Activated T-helper 1 cell treated with anti-CD3 and anti-CD28 coated beads, Interleukin-12 subunit alpha, Interleukin-12 subunit beta, Interleukin-2, Interleukin-4 antibody, amounts not matched to agents 30 ng/mL and 10 ng/mL and 1 ng/mL, durations not matched to agents 14 hours and 24 hours and 36 hours (primary cell): ENCODE measurements at regions of chr2 and their contacts with region 1.

Region 1: GRCh38 chr2:38572167-38572566 is 30.6 kb downstream of the HNRNPLL start:
- DNase-seq: no peak
- H3K4me3 Mint-ChIP-seq: peak overlapping the region; percentile 1
- H3K27ac Mint-ChIP-seq: peak overlapping the region; percentile 70
- H3K4me1 Mint-ChIP-seq: peaks cover 62% of the 10 kb centered on the region
- H3K27me3 Mint-ChIP-seq: no peaks in the 10 kb centered on the region

Region 2: GRCh38 chr2:38417745-38418689 is 154.2 kb before region 1 on chr2:
- intact Hi-C with region 1: no loop called
- DNase-seq: no peak
- H3K4me3 Mint-ChIP-seq: no peak overlapping the region
- H3K27ac Mint-ChIP-seq: no peak overlapping the region
- H3K4me1 Mint-ChIP-seq: no peaks in the 10 kb centered on the region
- H3K27me3 Mint-ChIP-seq: peaks cover 3% of the 10 kb centered on the region

Region 3: DNA sequence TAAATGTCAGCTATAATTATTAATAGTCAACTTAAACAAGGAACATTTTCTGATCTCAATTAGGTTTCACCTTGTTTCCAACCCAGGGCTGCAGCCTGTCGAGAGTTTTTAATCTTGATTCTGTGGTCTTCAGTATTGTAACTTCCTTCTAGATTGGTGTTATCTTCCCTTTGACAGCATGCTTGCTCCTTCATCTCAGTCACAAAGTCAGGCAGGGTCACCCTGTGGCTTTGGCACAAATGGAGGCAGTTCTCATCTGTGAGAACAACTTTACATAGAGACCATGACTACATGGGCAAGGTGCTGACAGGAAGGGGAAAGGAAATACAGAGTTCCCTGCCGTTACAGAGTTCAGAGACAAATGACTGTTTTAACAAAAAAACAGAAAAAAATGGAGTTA is 19.9 kb before region 1 on chr2:
- intact Hi-C with region 1: loop called (anchors 2 kb)
- DNase-seq: no peak
- H3K4me3 Mint-ChIP-seq: no peak overlapping the region
- H3K27ac Mint-ChIP-seq: no peak overlapping the region
- H3K4me1 Mint-ChIP-seq: peaks cover 26% of the 10 kb centered on the region
- H3K27me3 Mint-ChIP-seq: no peaks in the 10 kb centered on the region

Region 4: GRCh38 chr2:39017334-39017733 is 445.2 kb after region 1 on chr2:
- intact Hi-C with region 1: loop called (anchors 10 kb)
- DNase-seq: no peak
- H3K4me3 Mint-ChIP-seq: no peak overlapping the region
- H3K27ac Mint-ChIP-seq: no peak overlapping the region
- H3K4me1 Mint-ChIP-seq: peaks cover 9% of the 10 kb centered on the region
- H3K27me3 Mint-ChIP-seq: no peaks in the 10 kb centered on the region